WTC11 (cell line): ENCODE measurements at regions of chr11 and their contacts with region 1.

Region 1: GRCh38 chr11:304915-305843 is 2.4 kb upstream of the IFITM2 start:
- DNase-seq: peak; percentile 73
- ATAC-seq: peak; percentile 34
- H3K4me3 Mint-ChIP-seq: peak overlapping the region; percentile 43
- H3K27ac Mint-ChIP-seq: peak overlapping the region; percentile 99
- H3K4me1 Mint-ChIP-seq: peaks cover 83% of the 10 kb centered on the region
- H3K27me3 Mint-ChIP-seq: no peaks in the 10 kb centered on the region
- CTCF ChIP-seq: peak; percentile 34

Region 2: GRCh38 chr11:288328-289144 is 16.6 kb before region 1 on chr11 and contains the start of gene PGGHG:
- CTCF ChIA-PET with region 1: interaction called, 24 read pairs
- POLR2A ChIA-PET with region 1: interaction called, 5 read pairs
- DNase-seq: peak; percentile 45
- ATAC-seq: peak; percentile 31
- H3K4me3 Mint-ChIP-seq: peak within 1 kb of the TSS; percentile 75
- H3K27ac Mint-ChIP-seq: peak within 1 kb of the TSS; percentile 32
- H3K4me1 Mint-ChIP-seq: peaks cover 45% of the 10 kb centered on the region
- H3K27me3 Mint-ChIP-seq: peaks cover 19% of the 10 kb centered on the region
- CTCF ChIP-seq: no peak
- total RNA-seq, gene PGGHG: 74.9 to 111 TPM (median 106 TPM) in 3 replicates

Region 3: GRCh38 chr11:316031-316701 is 11.0 kb after region 1 on chr11:
- CTCF ChIA-PET with region 1: interaction called, 13 read pairs
- POLR2A ChIA-PET with region 1: interaction called, 5 read pairs
- DNase-seq: peak; percentile 29
- ATAC-seq: no peak
- H3K4me3 Mint-ChIP-seq: peak overlapping the region; percentile 75
- H3K27ac Mint-ChIP-seq: peak overlapping the region; percentile 96
- H3K4me1 Mint-ChIP-seq: peaks cover 43% of the 10 kb centered on the region
- H3K27me3 Mint-ChIP-seq: no peaks in the 10 kb centered on the region
- CTCF ChIP-seq: no peak

Region 4: GRCh38 chr11:334264-334994 is 29.2 kb after region 1 on chr11:
- CTCF ChIA-PET with region 1: interaction called, 10 read pairs
- POLR2A ChIA-PET with region 1: no interaction called
- DNase-seq: peak; percentile 74
- ATAC-seq: peak; percentile 87
- H3K4me3 Mint-ChIP-seq: peak overlapping the region; percentile 59
- H3K27ac Mint-ChIP-seq: peak overlapping the region; percentile 100
- H3K4me1 Mint-ChIP-seq: peaks cover 49% of the 10 kb centered on the region
- H3K27me3 Mint-ChIP-seq: peaks cover 10% of the 10 kb centered on the region
- CTCF ChIP-seq: no peak

Region 5: DNA sequence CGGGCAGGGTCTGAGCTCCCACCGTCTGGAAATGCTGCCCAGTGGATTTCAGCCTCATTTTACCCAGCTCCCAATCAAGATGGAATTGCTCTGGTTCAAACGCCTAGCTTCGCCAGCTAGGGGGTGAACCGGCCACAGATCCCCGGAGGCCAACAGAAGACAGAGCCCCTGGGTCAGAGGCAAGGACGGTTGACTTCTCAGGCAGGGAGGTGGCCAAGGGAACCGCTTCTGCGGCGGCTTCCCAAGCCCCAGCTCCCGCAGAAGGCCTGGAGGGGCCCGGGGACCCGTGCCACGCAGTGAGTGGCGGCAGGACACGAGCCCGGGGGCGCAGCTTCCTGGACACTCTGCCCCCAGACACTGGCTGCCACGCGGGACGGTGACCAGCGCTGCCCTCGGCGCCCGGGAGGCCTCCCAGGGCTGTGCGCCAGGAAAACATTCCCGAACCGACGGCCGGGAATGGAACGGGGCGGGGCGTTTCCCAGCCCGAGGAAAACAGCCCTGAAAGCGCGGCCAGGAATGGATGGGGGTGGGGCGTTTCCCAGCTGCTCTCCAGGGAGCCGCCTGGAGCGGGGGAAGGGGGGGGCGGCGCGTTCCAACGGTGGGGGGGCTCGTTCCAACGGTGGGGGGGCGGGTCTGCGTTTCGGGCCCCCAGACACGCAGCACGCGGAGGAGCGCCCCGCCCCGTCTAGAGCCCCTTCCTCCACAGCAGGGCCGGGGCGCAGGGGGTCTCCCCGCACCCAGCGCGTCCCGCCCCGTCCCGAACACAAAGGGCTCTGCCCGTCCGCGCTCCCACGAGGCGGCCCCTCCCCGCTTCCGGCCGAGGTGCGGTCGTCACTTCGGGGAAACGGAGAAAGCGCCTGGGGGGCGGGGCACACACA is 50.6 kb after region 1 on chr11:
- CTCF ChIA-PET with region 1: interaction called, 15 read pairs
- POLR2A ChIA-PET with region 1: interaction called, 4 read pairs
- DNase-seq: peak; percentile 93
- ATAC-seq: peak; percentile 86
- H3K4me3 Mint-ChIP-seq: peak overlapping the region; percentile 37
- H3K27ac Mint-ChIP-seq: peak overlapping the region; percentile 94
- H3K4me1 Mint-ChIP-seq: peaks cover 33% of the 10 kb centered on the region
- H3K27me3 Mint-ChIP-seq: peaks cover 11% of the 10 kb centered on the region
- CTCF ChIP-seq: no peak

Region 6: DNA sequence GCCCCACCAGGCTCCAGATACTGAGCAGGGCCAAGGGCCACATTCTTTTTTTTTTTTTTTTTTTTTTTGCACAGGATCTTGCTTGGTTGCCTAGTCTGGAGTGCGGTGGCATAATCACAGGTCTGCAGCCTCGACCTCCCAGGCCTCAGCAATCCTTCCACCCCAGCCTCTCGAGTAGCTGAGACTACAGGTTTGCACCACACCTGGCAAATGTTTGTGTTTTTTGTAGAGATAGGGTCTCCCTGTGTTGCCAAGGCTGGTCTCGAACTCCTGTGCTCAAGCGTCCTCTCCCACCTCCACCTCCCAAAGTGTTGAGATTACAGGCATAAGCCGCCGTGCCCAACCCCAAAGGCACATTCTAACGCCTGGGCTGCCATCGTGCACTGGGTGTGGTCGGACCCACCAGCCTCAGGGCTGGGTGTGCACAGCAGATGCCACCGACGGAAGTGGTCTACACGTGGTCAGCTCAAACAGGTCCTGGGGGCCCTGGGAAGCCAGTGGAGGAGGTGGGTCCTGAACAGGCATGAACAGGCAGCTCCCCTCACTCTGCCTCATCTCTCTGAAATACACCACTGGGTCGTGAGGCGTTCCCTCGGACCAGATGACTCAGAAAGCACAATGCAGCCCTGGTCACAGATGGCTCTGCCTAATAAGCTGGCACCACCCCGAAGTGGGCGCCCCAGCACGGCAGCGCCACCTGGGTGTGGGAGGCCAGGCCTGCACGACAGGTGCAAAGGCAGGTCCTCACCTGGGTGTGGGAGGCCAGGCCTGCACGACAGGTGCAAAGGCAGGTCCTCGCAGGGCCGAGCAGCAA is 59.0 kb after region 1 on chr11:
- CTCF ChIA-PET with region 1: interaction called, 25 read pairs
- POLR2A ChIA-PET with region 1: no interaction called
- DNase-seq: peak; percentile 82
- ATAC-seq: peak; percentile 84
- H3K4me3 Mint-ChIP-seq: no peak overlapping the region
- H3K27ac Mint-ChIP-seq: no peak overlapping the region
- H3K4me1 Mint-ChIP-seq: peaks cover 17% of the 10 kb centered on the region
- H3K27me3 Mint-ChIP-seq: peaks cover 23% of the 10 kb centered on the region
- CTCF ChIP-seq: peak; percentile 44